HepG2 (cell line): ENCODE measurements at regions of chr2 and their contacts with region 1.

Region 1: GRCh38 chr2:119028327-119029174 is 86.6 kb downstream of the MARCO start:
- DNase-seq: peak; percentile 45
- ATAC-seq: peak; percentile 81
- H3K4me3 ChIP-seq: no peak overlapping the region
- H3K27ac ChIP-seq: no peak overlapping the region
- H3K4me1 ChIP-seq: no peaks in the 10 kb centered on the region
- H3K27me3 ChIP-seq: peaks cover 0 to 4% of the 10 kb centered on the region in 2 experiments; a peak in 1 of 5 replicates
- CTCF ChIP-seq: peak; percentile 70
- EP300 ChIP-seq: no peak
- POLR2A ChIP-seq: no peak
- RAD21 ChIP-seq: no peak

Region 2: GRCh38 chr2:118622913-118623312 is 405.6 kb before region 1 on chr2:
- CTCF ChIA-PET with region 1: no interaction called
- POLR2A ChIA-PET with region 1: no interaction called
- in situ Hi-C with region 1: no loop called
- intact Hi-C with region 1: no loop called
- DNase-seq: no peak
- ATAC-seq: no peak
- H3K4me3 ChIP-seq: no peak overlapping the region
- H3K27ac ChIP-seq: no peak overlapping the region
- H3K4me1 ChIP-seq: no peaks in the 10 kb centered on the region
- H3K27me3 ChIP-seq: no peaks in the 10 kb centered on the region
- CTCF ChIP-seq: no peak
- EP300 ChIP-seq: no peak
- POLR2A ChIP-seq: no peak
- RAD21 ChIP-seq: no peak

Region 3: GRCh38 chr2:119174216-119175037 is 145.9 kb after region 1 on chr2:
- CTCF ChIA-PET with region 1: interaction called, 4 read pairs
- POLR2A ChIA-PET with region 1: no interaction called
- in situ Hi-C with region 1: no loop called
- intact Hi-C with region 1: loop called (anchors 2 kb)
- DNase-seq: peak; percentile 37
- ATAC-seq: peak; percentile 93
- H3K4me3 ChIP-seq: no peak overlapping the region
- H3K27ac ChIP-seq: no peak overlapping the region
- H3K4me1 ChIP-seq: no peaks in the 10 kb centered on the region
- H3K27me3 ChIP-seq: peaks cover 0 to 23% of the 10 kb centered on the region in 2 experiments; a peak in 1 of 5 replicates
- CTCF ChIP-seq: peak; percentile 89
- EP300 ChIP-seq: no peak
- POLR2A ChIP-seq: no peak
- RAD21 ChIP-seq: peak; percentile 68

Region 4: GRCh38 chr2:119311356-119311755 is 282.8 kb after region 1 on chr2:
- CTCF ChIA-PET with region 1: interaction called, 3 read pairs
- POLR2A ChIA-PET with region 1: no interaction called
- in situ Hi-C with region 1: no loop called
- intact Hi-C with region 1: loop called (anchors 5 kb)
- DNase-seq: no peak
- ATAC-seq: peak; percentile 76
- H3K4me3 ChIP-seq: no peak overlapping the region
- H3K27ac ChIP-seq: no peak overlapping the region
- H3K4me1 ChIP-seq: peaks cover 23% of the 10 kb centered on the region
- H3K27me3 ChIP-seq: no peaks in the 10 kb centered on the region
- CTCF ChIP-seq: peak; percentile 50
- EP300 ChIP-seq: no peak
- POLR2A ChIP-seq: no peak
- RAD21 ChIP-seq: no peak